PC-9 (cell line): ENCODE measurements at regions of chr11 and their contacts with region 1.

Region 1: GRCh38 chr11:34890812-34891211 is 25.4 kb downstream of the APIP start:
- DNase-seq: peak in 1 of 2 experiments; percentile 64
- H3K4me3 ChIP-seq: no peak overlapping the region
- H3K27ac ChIP-seq: no peak overlapping the region
- H3K4me1 ChIP-seq: peaks cover 37% of the 10 kb centered on the region
- H3K27me3 ChIP-seq: no peaks in the 10 kb centered on the region
- CTCF ChIP-seq: peak; percentile 86

Region 2: DNA sequence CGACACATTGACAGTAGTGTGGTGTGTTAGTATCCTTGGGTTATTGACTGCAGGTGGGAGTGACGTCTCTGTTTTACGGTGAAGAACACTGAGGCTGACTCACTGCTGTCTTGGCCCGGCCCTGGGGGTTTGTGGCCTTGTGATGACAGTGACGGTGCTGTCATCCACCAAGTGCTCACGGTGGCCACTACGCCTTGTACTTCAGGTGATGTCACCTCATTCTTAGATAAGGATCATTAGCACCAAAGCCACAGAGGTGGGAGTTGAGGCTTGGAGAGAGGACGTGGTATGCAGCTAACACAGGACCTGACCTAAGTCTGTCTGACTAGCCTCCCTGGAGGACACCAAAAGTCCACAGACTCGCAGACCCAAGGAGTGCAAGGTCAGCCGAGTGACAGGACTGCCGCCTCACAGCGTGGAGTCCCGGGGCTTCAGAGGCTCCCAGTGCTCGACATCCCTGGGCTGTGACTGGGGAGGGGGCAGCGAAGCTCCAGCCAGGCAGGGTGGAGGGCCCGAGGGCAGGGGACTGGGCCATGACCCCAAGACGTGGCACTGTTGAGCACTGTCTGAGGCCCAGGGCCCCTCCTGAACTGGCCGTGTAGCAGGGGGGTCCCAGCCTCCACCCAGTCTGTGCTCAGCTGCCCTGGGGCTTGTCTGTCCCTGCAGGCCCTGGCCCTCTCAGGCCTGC is 728.9 kb before region 1 on chr11:
- CTCF ChIA-PET with region 1: no interaction called
- POLR2A ChIA-PET with region 1: no interaction called
- intact Hi-C with region 1: loop called (anchors 10 kb)
- DNase-seq: peak; percentile 17 to 53
- H3K4me3 ChIP-seq: no peak overlapping the region
- H3K27ac ChIP-seq: no peak overlapping the region
- H3K4me1 ChIP-seq: peaks cover 17% of the 10 kb centered on the region
- H3K27me3 ChIP-seq: no peaks in the 10 kb centered on the region
- CTCF ChIP-seq: no peak

Region 3: DNA sequence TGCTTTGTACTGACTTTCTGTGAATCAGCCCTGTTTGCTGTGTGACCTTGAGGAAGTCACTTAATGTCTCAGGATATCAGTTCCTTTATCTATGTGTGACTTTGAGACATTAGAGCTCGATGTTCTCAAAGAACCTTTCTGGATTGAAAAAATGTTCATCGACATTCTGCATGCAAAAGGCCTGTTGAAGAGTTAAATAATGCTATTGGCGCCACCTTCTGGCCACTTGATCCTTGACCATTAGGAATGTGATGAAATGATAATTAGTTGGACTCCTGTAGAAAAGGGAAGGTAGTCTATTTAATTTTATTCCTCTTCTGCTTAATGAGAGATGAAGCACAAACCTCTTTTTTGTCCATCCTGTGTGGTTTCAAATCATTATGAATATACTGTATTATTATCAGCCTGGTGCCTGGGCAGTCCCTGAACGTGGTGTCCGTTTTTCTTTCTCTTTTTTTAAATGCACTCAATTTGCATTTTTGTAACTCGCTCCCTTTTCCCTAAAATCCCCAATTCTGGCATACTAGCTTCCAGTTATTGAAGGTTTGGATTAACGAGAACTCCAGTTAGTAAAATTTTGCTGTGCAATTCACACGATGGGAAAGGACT is 397.9 kb before region 1 on chr11:
- CTCF ChIA-PET with region 1: no interaction called
- POLR2A ChIA-PET with region 1: interaction called, 3 read pairs
- intact Hi-C with region 1: loop called (anchors 2 kb)
- DNase-seq: peak; percentile 41 to 62
- H3K4me3 ChIP-seq: no peak overlapping the region
- H3K27ac ChIP-seq: no peak overlapping the region
- H3K4me1 ChIP-seq: peaks cover 8% of the 10 kb centered on the region
- H3K27me3 ChIP-seq: no peaks in the 10 kb centered on the region
- CTCF ChIP-seq: peak; percentile 91

Region 4: GRCh38 chr11:34585735-34586487 is 304.9 kb before region 1 on chr11:
- CTCF ChIA-PET with region 1: interaction called, 9 read pairs
- POLR2A ChIA-PET with region 1: no interaction called
- intact Hi-C with region 1: loop called (anchors 1 kb)
- DNase-seq: peak in 1 of 2 experiments; percentile 64
- H3K4me3 ChIP-seq: no peak overlapping the region
- H3K27ac ChIP-seq: peak overlapping the region; percentile 4; the same call in 1 of the 2 replicates
- H3K4me1 ChIP-seq: peaks cover 35% of the 10 kb centered on the region
- H3K27me3 ChIP-seq: no peaks in the 10 kb centered on the region
- CTCF ChIP-seq: peak; percentile 94

Region 5: DNA sequence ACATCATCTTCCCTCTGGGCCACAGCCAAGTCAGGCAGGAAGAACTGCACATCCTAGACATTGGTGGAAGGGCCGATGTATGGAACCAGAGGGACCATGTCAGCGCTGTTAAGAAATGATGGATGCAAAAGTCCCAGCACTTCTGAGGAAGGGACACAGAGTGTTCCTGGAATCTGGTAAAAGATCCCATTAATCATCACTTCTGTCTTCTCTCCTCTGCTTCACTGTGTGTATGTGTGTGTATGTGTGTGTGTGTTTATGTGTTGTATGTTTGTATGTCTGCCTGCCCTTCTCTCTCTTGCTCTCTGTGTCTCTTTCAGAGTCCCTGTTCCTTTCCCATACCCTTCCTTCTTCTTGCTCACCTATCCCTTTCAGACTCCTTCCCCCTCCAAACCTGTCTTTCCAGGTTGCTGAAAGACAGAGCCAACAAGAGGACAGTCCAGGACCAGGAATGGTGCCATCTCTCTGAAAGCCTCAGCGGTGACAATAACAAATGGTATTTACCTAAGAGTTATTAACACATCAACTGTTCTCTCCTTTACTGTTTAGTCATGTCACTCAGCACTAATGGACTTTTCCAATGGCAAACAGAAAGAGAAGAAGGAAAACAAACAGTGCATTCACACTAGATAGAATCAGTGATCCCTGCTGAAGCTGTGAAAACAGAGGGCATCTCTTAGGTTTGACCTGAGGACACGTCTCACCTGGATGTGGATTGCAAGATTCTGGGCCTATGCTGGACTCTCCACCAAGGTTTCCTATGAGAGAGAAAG is 222.8 kb before region 1 on chr11:
- CTCF ChIA-PET with region 1: no interaction called
- POLR2A ChIA-PET with region 1: no interaction called
- intact Hi-C with region 1: loop called (anchors 5 kb)
- DNase-seq: peak; percentile 78 to 99
- H3K4me3 ChIP-seq: no peak overlapping the region
- H3K27ac ChIP-seq: peak overlapping the region; percentile 85
- H3K4me1 ChIP-seq: peaks cover 50% of the 10 kb centered on the region
- H3K27me3 ChIP-seq: no peaks in the 10 kb centered on the region
- CTCF ChIP-seq: no peak

Region 6: GRCh38 chr11:34696862-34697261 is 193.9 kb before region 1 on chr11:
- CTCF ChIA-PET with region 1: no interaction called
- POLR2A ChIA-PET with region 1: no interaction called
- intact Hi-C with region 1: no loop called
- DNase-seq: no peak
- H3K4me3 ChIP-seq: no peak overlapping the region
- H3K27ac ChIP-seq: no peak overlapping the region
- H3K4me1 ChIP-seq: no peaks in the 10 kb centered on the region
- H3K27me3 ChIP-seq: no peaks in the 10 kb centered on the region
- CTCF ChIP-seq: no peak

Region 7: GRCh38 chr11:34798985-34799384 is 91.8 kb before region 1 on chr11:
- CTCF ChIA-PET with region 1: no interaction called
- POLR2A ChIA-PET with region 1: no interaction called
- intact Hi-C with region 1: no loop called
- DNase-seq: no peak
- H3K4me3 ChIP-seq: no peak overlapping the region
- H3K27ac ChIP-seq: no peak overlapping the region
- H3K4me1 ChIP-seq: no peaks in the 10 kb centered on the region
- H3K27me3 ChIP-seq: no peaks in the 10 kb centered on the region
- CTCF ChIP-seq: no peak

Region 8: GRCh38 chr11:34869426-34869825 is 21.4 kb before region 1 on chr11:
- CTCF ChIA-PET with region 1: no interaction called
- POLR2A ChIA-PET with region 1: no interaction called
- intact Hi-C with region 1: no loop called
- DNase-seq: no peak
- H3K4me3 ChIP-seq: no peak overlapping the region
- H3K27ac ChIP-seq: no peak overlapping the region
- H3K4me1 ChIP-seq: no peaks in the 10 kb centered on the region
- H3K27me3 ChIP-seq: no peaks in the 10 kb centered on the region
- CTCF ChIP-seq: no peak